GM12878 (cell line): ENCODE measurements at regions of chr1 and their contacts with region 1.

Region 1: DNA sequence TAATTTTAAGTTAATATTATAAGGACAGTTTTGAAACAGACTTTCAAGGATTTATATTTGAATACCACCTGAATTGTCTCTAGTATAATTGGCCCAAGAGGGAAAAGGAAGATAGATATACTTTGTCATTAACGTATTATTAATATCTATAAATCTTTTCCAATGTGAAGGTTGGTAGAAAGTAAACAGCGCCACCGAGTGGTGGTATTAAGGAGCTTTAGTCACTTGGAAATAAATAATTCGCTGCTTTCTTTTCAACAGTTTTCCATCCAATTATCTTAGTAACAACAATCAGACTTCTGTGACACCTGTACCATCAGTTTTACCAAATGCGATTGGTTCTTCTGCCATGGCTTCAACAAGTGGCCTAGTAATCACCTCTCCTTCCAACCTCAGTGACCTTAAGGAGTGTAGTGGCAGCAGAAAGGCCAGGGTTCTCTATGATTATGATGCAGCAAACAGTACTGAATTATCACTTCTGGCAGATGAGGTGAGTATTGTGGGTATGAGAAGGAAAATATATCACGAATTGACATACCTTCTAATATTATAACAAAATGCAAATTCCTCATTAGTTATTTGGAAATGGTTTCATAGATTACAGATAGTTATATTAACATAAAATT is 37.7 kb downstream of the SH3GLB1 start:
- DNase-seq: no peak
- ATAC-seq: peak; percentile 45; the same call in 1 of the 3 replicates
- H3K4me3 ChIP-seq: no peak overlapping the region
- H3K27ac ChIP-seq: no peak overlapping the region
- H3K4me1 ChIP-seq: no peaks in the 10 kb centered on the region
- H3K27me3 ChIP-seq: no peaks in the 10 kb centered on the region
- CTCF ChIP-seq: peak; percentile 39 to 51 (median 46); a peak in 5 of 6 replicates
- EP300 ChIP-seq: no peak
- POLR2A ChIP-seq: no peak
- RAD21 ChIP-seq: peak; percentile 55

Region 2: DNA sequence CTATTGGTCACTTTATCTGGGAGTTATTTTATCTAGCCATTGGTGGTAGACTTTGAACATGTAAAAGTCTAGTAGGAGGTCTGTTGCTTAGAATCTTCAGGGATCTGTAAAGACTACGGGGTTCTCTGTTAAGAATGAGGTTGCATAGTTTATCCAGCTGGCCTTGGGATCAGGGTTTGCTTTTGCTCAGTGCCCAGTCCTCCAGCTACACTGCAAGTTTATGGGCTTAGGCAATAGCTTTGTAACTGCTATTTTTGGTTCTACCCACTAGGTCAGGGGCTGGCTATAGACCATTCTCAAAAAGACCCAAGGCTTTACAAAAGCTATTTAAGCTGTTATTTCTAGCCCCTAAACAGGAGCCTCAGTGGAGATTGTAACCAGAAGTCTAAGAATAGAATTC is 27.9 kb before region 1 on chr1:
- CTCF ChIA-PET with region 1: interaction called, 12 read pairs
- POLR2A ChIA-PET with region 1: no interaction called
- RAD21 ChIA-PET with region 1: interaction called, 3 read pairs
- SMC1A ChIA-PET with region 1: interaction called, 3 read pairs
- in situ Hi-C with region 1: no loop called
- intact Hi-C with region 1: no loop called
- DNase-seq: no peak
- ATAC-seq: peak; percentile 37
- H3K4me3 ChIP-seq: no peak overlapping the region
- H3K27ac ChIP-seq: no peak overlapping the region
- H3K4me1 ChIP-seq: peaks cover 6% of the 10 kb centered on the region; the same call in 1 of the 2 replicates
- H3K27me3 ChIP-seq: no peaks in the 10 kb centered on the region
- CTCF ChIP-seq: no peak
- EP300 ChIP-seq: no peak
- POLR2A ChIP-seq: no peak
- RAD21 ChIP-seq: no peak

Region 3: DNA sequence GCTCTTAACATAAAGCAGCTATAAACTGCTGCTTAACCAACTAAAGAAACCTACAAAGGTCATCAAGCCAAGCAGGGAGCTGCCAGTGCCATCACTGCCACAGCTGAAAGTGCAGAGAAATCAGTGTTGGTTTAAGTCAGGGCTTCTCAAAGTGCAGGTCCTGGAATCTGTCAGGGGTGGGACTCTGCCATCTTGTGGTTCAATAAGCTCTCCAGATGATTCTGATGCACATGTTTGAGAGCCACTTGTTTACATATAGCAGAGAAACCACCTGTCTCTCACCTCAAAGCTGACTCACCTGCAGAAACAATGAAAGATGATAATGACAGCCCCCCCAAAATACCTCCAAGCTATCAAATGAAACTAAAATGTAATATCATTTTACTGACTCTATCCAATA is 11.6 kb after region 1 on chr1:
- CTCF ChIA-PET with region 1: interaction called, 8 read pairs
- POLR2A ChIA-PET with region 1: interaction called, 3 read pairs
- RAD21 ChIA-PET with region 1: no interaction called
- SMC1A ChIA-PET with region 1: interaction called, 15 read pairs
- in situ Hi-C with region 1: no loop called
- intact Hi-C with region 1: no loop called
- DNase-seq: no peak
- ATAC-seq: peak; percentile 23; the same call in 2 of the 3 replicates
- H3K4me3 ChIP-seq: no peak overlapping the region
- H3K27ac ChIP-seq: no peak overlapping the region
- H3K4me1 ChIP-seq: no peaks in the 10 kb centered on the region; the same call in 1 of the 2 replicates
- H3K27me3 ChIP-seq: 0 out of 4 replicates have a peak, but pooled peaks cover 0 to 2% of the 10 kb centered on the region in 2 experiments
- CTCF ChIP-seq: peak in 2 of 3 experiments; percentile 20 to 23; a peak in 2 of 6 replicates
- EP300 ChIP-seq: no peak
- POLR2A ChIP-seq: no peak
- RAD21 ChIP-seq: no peak